Sigmoid colon (tissue), 7 donors: ENCODE measurements at regions of chr12 and their contacts with region 1.

Region 1: DNA sequence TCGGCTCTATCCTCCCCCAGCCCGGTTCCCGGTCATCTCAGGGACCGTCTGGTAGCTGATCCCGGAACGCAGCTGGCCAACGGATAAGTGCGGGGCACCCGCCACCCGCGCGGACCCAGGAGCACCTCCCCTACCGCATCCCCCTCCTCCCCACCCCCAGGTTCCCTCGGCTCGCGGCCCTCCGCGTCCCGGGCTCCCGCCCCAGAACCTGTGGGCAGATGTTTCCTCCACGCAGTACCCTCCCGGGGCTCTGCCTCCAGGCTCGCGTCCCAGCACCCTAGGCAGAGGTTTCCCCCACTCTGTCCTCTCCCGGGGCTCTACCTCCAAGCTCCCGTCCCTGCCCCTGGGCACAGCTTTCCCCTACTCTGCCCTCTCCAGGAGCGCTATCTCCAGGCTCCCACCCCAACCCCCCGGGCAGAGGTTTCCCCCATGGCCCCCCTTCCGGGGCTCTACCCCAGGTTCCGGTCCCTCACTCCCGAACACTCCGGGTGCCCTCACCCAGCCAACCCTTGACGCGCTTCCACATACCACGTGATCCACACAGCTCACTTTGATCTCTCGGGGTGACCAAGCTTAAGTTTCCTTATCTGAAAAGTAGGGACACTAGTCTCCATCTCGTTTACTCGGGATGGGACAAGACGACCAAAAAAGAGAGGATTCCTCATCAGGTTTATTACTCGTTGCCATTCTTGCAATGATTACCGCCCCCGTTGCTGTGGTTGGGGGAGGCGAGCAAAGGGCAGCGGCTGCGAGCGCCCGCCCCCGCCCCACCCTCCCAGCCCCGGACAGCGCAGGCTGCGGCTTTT is at the start of gene CCDC38:
- DNase-seq: peak; percentile 91
- H3K4me3 ChIP-seq: peak within 1 kb of the TSS; percentile 83 to 96 (median 90)
- H3K27ac ChIP-seq: peak within 1 kb of the TSS; percentile 84 to 89 (median 85)
- H3K4me1 ChIP-seq: peaks cover 0 to 11% (median 7%) of the 10 kb centered on the region in 4 donors
- H3K27me3 ChIP-seq: no peaks in the 10 kb centered on the region
- CTCF ChIP-seq: no peak
- EP300 ChIP-seq: no peak
- POLR2A ChIP-seq: peak; percentile 14 to 19
- total RNA-seq, gene CCDC38: not detected

Region 2: GRCh38 chr12:95858479-95859343 is 84.0 kb before region 1 on chr12 and contains the start of gene SNRPF:
- intact Hi-C with region 1: loop called (anchors 5 kb)
- DNase-seq: peak; percentile 98
- H3K4me3 ChIP-seq: peak within 1 kb of the TSS; percentile 66 to 79 (median 72)
- H3K27ac ChIP-seq: peak within 1 kb of the TSS; percentile 74 to 81 (median 79)
- H3K4me1 ChIP-seq: peaks cover 0 to 22% (median 20%) of the 10 kb centered on the region in 4 donors
- H3K27me3 ChIP-seq: no peaks in the 10 kb centered on the region
- CTCF ChIP-seq: no peak
- EP300 ChIP-seq: no peak
- POLR2A ChIP-seq: no peak
- total RNA-seq, gene SNRPF: 3.0 to 9.0 (median 7.2) TPM

Region 3: DNA sequence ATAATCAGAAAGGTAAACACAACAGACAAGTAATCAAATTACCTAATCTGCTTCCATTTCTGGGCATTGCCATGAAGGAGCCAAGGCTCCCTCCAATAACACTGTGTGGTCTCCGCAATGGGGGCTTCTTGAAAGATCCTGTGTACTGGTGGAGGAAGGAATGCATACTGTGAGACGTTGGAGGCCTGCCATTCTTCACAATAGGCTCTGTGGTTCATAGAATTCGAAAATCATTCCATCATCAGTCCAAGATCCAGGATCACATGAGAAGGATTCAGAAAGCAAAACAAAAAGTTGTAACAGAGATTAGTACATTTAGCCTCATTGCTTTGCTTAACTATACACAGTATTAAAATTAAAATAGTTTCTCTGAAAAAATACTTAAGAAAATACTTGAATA is 381.2 kb after region 1 on chr12:
- intact Hi-C with region 1: no loop called
- DNase-seq: no peak
- H3K4me3 ChIP-seq: no peak overlapping the region
- H3K27ac ChIP-seq: no peak overlapping the region
- H3K4me1 ChIP-seq: peaks cover 0 to 18% (median 2%) of the 10 kb centered on the region in 4 donors
- H3K27me3 ChIP-seq: no peaks in the 10 kb centered on the region
- CTCF ChIP-seq: no peak
- EP300 ChIP-seq: no peak
- POLR2A ChIP-seq: no peak

Region 4: GRCh38 chr12:97482143-97482693 is 1539.5 kb after region 1 on chr12:
- intact Hi-C with region 1: no loop called
- DNase-seq: no peak
- H3K4me3 ChIP-seq: no peak overlapping the region
- H3K27ac ChIP-seq: no peak overlapping the region
- H3K4me1 ChIP-seq: no peaks in the 10 kb centered on the region
- H3K27me3 ChIP-seq: no peaks in the 10 kb centered on the region
- CTCF ChIP-seq: no peak
- EP300 ChIP-seq: no peak
- POLR2A ChIP-seq: no peak